Activated CD4-positive, alpha-beta T cell treated with anti-CD3 and anti-CD28 coated beads for 36 hours (primary cell): ENCODE measurements at regions of chr11 and their contacts with region 1.

Region 1: DNA sequence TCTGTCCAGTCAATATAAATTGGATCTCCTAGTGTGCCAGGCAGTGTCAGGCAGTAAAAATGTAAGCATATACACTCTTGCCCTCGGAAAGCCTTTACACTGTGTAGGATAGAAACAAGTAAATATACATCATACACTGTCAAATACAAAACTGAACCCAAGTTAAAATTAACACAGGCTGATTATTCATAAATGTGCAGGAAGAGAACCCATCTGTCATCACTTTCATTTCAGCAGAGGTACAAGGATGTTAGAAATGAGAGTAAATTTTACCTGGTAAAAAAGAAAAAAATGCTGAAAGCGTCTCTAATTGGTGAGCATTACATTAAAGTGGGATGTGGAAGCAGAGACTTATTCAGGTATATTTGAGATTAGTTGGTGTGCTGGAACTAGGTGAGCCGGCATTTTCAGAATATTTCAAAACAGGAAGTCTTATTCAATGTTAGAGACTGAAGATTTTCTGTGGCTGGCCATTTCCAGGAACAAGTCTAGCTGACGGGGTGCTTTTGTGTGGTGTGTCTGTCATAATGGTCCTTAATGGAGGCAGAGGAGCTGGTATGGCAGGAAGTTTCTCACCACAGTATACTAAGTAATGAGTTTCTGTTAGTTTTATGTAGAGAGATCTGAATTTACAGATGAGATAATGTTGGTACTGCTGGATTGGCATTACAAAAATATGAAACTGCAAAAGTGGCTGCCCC is 192.6 kb downstream of the CASP12 start:
- DNase-seq: peak; percentile 83
- ATAC-seq: peak; percentile 93
- H3K4me3 Mint-ChIP-seq: peak overlapping the region; percentile 58
- H3K27ac Mint-ChIP-seq: peak overlapping the region; percentile 75
- H3K4me1 Mint-ChIP-seq: peaks cover 52% of the 10 kb centered on the region
- H3K27me3 Mint-ChIP-seq: no peaks in the 10 kb centered on the region

Region 2: DNA sequence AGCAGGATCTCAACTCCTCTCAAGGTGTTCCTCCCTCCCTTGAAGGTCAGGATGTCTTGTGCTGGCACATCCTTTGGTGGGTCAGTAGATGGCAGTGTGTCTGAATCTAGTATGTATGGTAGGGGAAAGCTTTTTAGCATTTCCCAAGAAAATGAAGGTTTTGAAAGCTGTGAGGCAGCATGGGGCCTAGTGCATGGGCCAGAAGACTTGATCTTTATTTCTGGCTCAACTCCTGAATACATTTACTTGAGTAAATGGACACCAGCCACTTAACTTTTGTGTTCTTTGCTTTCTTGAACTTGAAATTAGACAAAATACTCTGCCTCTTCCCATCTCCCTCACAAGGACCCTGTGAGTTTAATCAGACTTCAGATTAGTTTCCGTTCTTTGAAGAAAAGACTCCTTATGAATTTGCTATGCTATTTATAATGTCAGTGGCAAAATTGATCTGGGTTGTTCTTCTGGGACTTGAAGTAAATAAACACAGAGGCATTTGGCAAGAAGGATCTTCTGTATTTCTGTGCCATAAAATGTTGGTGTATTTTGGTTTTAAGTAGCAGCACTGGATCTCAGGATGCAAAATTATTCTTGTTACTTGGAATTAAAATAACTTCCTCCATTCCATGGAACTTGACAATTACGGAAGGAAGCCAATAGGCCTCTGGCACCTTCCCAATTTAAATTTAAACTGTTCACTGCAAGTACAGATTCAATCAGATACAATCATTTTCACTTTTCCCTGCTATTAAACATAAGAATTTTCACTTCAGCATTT is 96.1 kb before region 1 on chr11:
- CTCF ChIA-PET with region 1: no interaction called
- POLR2A ChIA-PET with region 1: no interaction called
- intact Hi-C with region 1: loop called (anchors 1 to 2 kb)
- DNase-seq: peak; percentile 41
- ATAC-seq: peak; percentile 96
- H3K4me3 Mint-ChIP-seq: no peak overlapping the region
- H3K27ac Mint-ChIP-seq: peak overlapping the region; percentile 32
- H3K4me1 Mint-ChIP-seq: peaks cover 20% of the 10 kb centered on the region
- H3K27me3 Mint-ChIP-seq: no peaks in the 10 kb centered on the region

Region 3: DNA sequence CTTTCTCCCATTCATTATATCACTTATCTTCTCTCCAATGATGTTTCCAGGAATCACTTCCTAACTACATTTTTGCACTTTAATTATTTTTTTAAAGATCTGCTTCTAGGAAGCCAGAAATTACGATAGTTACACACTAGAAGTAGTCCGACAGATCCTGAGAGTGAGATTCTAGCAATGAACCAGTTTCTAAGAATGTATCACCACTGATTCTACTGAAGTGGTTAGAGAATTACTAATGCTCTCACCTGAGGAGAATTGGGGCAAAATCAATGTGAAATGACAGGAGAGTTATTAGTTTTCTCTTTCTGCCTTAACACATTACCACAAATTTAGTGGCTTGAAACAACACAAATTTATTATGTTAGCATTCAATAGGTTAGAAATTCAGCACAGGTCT is 48.6 kb before region 1 on chr11:
- CTCF ChIA-PET with region 1: no interaction called
- POLR2A ChIA-PET with region 1: no interaction called
- intact Hi-C with region 1: loop called (anchors 1 to 2 kb)
- DNase-seq: no peak
- ATAC-seq: peak; percentile 60
- H3K4me3 Mint-ChIP-seq: no peak overlapping the region
- H3K27ac Mint-ChIP-seq: no peak overlapping the region
- H3K4me1 Mint-ChIP-seq: peaks cover 22% of the 10 kb centered on the region
- H3K27me3 Mint-ChIP-seq: peaks cover 2% of the 10 kb centered on the region

Region 4: DNA sequence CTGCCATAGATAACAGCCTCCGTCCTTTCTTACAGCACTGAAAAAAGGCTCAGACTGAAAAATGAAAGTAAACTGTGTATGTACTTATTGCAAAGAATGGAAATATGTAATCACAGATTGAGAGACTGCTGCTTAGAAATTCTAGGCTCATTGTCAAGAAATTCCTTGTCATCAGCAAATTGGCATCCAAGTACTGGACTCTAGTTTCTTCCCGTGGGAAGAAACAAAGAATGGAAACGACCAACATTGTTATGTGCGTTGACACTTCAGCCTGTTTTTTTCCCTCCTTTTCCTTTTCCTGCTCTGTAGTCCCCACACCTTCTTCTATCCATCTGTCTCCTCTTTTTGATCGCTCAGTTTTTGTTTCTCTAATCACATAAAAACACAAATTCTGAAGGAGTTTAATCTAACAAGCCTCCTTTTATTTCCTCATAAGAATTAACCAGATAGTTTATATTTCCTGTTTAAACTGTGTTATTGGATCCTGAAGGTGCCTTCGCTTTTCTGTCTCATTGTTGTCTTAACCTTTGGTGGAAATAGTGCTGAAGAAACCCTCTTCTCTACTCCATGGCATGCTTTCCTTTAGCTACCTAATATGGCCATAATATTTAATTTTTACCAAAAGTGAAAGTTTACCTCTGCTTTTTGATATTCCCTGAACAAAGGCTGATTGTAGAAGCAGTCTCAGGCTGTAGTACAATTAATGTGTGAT is 212.6 kb after region 1 on chr11:
- CTCF ChIA-PET with region 1: no interaction called
- POLR2A ChIA-PET with region 1: no interaction called
- intact Hi-C with region 1: loop called in 1 of 2 experiments (anchors 10 kb)
- DNase-seq: no peak
- ATAC-seq: peak; percentile 79
- H3K4me3 Mint-ChIP-seq: peak overlapping the region; percentile 65
- H3K27ac Mint-ChIP-seq: peak overlapping the region; percentile 73
- H3K4me1 Mint-ChIP-seq: peaks cover 45% of the 10 kb centered on the region
- H3K27me3 Mint-ChIP-seq: no peaks in the 10 kb centered on the region

Region 5: DNA sequence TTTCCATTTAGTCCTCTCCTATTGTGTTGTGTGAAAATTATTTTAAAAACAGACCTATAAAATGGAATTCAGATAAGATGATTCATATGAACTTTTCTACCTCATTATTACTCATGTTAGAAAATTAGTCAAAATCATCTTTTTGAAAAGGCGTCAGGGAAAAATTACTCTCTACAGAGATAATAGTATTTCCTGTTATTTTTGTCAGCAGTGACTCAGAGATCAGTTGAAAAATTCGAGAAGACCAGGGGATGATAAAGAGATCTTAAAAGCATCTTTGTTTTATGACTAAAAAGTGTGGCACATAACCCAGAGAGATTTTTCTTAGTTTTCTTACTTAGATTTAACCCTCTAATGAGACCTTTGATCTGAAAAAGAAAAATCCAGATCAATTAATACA is 591.8 kb after region 1 on chr11:
- CTCF ChIA-PET with region 1: no interaction called
- POLR2A ChIA-PET with region 1: no interaction called
- intact Hi-C with region 1: loop called in 1 of 2 experiments (anchors 5 kb)
- DNase-seq: no peak
- ATAC-seq: peak; percentile 86
- H3K4me3 Mint-ChIP-seq: no peak overlapping the region
- H3K27ac Mint-ChIP-seq: peak overlapping the region; percentile 40
- H3K4me1 Mint-ChIP-seq: peaks cover 17% of the 10 kb centered on the region
- H3K27me3 Mint-ChIP-seq: peaks cover 17% of the 10 kb centered on the region